Prostate gland (tissue), 2 donors: ENCODE measurements at regions of chr15 and their contacts with region 1.

Region 1: DNA sequence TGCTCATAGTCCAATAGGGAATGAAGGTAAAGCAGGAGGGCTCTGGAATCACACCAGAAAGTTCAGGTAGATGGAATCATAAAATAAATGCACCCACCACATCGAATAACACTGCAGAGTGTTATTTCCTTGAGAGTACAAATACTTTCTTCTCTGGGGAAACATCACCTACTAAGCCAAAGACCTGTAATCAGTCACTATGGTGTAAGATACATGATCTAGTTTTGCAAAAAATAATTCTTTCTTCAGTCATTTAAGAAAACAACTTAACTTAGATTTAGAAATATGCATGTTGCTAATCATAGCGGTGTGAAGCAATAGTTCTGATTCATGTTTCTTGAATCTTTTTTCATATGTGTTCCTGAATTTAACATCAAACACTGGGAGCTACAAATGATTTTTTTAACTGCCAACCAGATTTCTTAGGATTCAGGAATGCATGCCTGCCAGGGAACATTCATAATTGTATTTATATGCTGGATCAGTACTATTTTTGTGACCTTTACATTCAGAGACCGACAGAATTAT is 40.2 kb upstream of the MEIS2 start:
- DNase-seq: no peak
- H3K4me3 ChIP-seq: no peak overlapping the region
- H3K27ac ChIP-seq: no peak overlapping the region
- H3K4me1 ChIP-seq: no peaks in the 10 kb centered on the region
- H3K27me3 ChIP-seq: no peaks in the 10 kb centered on the region
- CTCF ChIP-seq: no peak
- POLR2A ChIP-seq: no peak

Region 2: DNA sequence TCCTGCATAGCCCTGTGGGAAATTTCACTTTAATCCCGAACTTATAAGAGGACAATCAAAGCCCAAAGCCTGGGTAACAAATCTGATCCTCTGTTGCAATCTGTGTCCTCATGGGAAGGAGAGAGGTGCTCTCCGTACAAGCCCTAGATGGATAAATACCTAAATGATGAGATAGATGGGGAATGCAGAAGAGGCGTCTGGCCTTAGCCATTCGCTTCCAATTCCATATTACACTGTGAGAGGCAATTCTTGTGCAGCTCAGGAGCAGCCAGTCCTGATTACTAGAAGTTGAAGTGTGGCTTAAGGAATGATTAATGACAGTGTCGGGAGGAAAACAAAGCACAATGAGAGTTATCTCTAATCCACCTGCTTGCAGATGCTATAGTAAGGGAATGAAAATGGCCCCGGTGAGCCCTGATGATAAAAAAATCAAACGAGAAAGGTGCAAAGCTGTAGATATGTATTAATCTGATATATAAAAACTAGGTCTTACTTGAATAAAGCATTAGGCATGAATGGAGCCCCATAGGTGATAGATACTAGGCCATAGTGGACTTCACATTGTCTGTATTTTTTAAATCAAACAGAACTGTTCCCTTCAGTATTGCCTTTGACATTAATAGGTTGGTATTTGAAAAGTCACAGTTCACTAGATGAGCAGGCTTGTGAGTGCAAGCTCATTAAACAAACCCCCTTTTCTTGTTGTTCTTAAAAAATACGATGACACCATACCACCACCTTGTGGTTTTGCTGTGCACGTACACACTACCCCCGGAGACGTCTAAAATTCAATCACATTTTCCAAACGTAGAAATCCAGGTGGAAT is 739.6 kb after region 1 on chr15:
- intact Hi-C with region 1: loop called (anchors 10 kb)
- DNase-seq: no peak
- H3K4me3 ChIP-seq: no peak overlapping the region
- H3K27ac ChIP-seq: no peak overlapping the region
- H3K4me1 ChIP-seq: no peaks in the 10 kb centered on the region
- H3K27me3 ChIP-seq: no peaks in the 10 kb centered on the region
- CTCF ChIP-seq: peak in 3 of 4 experiments; percentile 54 to 62 (median 59)
- POLR2A ChIP-seq: no peak